Transverse colon (tissue), 4 donors: ENCODE measurements at regions of chr2 and their contacts with region 1.

Region 1: DNA sequence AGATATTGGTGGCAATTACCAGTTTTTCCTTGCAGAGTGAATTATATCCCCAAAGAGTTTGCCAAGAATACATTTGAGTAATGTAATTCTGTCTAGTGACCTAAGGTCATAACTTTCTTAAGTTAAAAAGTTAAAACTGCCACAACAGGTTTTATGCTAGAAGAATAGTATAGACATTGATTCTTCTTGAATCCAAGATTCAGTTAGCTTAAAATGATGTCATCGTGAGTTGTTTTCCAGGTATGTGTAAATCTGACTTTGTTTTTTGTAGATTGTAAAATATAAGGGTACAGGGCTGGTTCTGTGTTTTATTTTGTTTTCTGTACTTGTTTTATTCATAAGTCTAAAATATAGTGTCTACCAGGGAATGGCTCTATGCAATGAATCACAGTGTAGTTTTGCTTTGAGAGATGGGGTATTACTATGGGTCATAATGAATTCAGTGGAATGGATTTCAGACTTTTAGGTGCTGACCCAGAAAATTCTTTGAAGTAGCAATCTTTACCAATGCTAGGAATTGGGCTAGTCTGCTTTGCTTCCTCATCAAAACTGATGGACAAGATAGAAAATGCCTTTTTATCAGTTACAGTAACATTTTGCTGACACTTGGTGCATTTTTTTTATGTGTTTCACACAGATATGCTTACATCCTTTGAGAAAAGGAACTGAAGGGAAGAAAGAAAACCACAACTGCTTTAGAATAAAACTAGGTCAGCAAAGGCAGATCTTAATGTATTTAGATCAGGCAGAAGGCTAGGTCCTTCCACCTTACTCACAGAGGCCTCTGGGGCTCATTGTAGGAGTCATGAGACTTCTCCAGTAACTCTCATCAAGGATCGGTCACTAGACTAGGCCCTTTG is 20.8 kb upstream of the MGAT5 start:
- DNase-seq: no peak
- H3K4me3 ChIP-seq: no peak overlapping the region
- H3K27ac ChIP-seq: peak overlapping the region; percentile 42 to 53 (median 46)
- H3K4me1 ChIP-seq: peaks cover 7 to 45% (median 25%) of the 10 kb centered on the region in 4 donors
- H3K27me3 ChIP-seq: no peaks in the 10 kb centered on the region
- CTCF ChIP-seq: no peak
- EP300 ChIP-seq: no peak
- POLR2A ChIP-seq: no peak

Region 2: GRCh38 chr2:134189009-134189720 is 43.9 kb before region 1 on chr2:
- in situ Hi-C with region 1: no loop called
- intact Hi-C with region 1: loop called (anchors 1 kb)
- DNase-seq: peak; percentile 32
- H3K4me3 ChIP-seq: no peak overlapping the region
- H3K27ac ChIP-seq: peak overlapping the region in 1 of 4 donors; percentile 27
- H3K4me1 ChIP-seq: peaks cover 0 to 24% (median 5%) of the 10 kb centered on the region in 4 donors
- H3K27me3 ChIP-seq: no peaks in the 10 kb centered on the region
- CTCF ChIP-seq: no peak
- EP300 ChIP-seq: no peak
- POLR2A ChIP-seq: no peak